ENCODE measurements at regions of chr3 and their contacts with region 1.

Region 1: GRCh38 chr3:116242825-116243224 is 202.5 kb downstream of the LSAMP start:
- DNase-seq: no peak
- ATAC-seq: no peak
- H3K4me3 ChIP-seq: no peak overlapping the region
- H3K4me3 Mint-ChIP-seq: no peak overlapping the region
- H3K27ac ChIP-seq: no peak overlapping the region
- H3K27ac Mint-ChIP-seq: no peak overlapping the region
- H3K4me1 ChIP-seq: no peaks in the 10 kb centered on the region
- H3K4me1 Mint-ChIP-seq: no peaks in the 10 kb centered on the region
- H3K27me3 ChIP-seq: no peaks in the 10 kb centered on the region
- H3K27me3 Mint-ChIP-seq: no peaks in the 10 kb centered on the region
- CTCF ChIP-seq: no peak

Region 2: GRCh38 chr3:115436767-115437301 is 806.0 kb before region 1 on chr3:
- CTCF ChIA-PET with region 1: no interaction called
- POLR2A ChIA-PET with region 1: no interaction called
- intact Hi-C with region 1: loop called in 1 of 2 experiments (anchors 5 kb)
- DNase-seq: no peak
- ATAC-seq: no peak
- H3K4me3 ChIP-seq: no peak overlapping the region
- H3K4me3 Mint-ChIP-seq: no peak overlapping the region
- H3K27ac ChIP-seq: no peak overlapping the region
- H3K27ac Mint-ChIP-seq: no peak overlapping the region
- H3K4me1 ChIP-seq: no peaks in the 10 kb centered on the region
- H3K4me1 Mint-ChIP-seq: no peaks in the 10 kb centered on the region
- H3K27me3 ChIP-seq: no peaks in the 10 kb centered on the region
- H3K27me3 Mint-ChIP-seq: no peaks in the 10 kb centered on the region
- CTCF ChIP-seq: no peak

Region 3: GRCh38 chr3:116211901-116212300 is 30.9 kb before region 1 on chr3:
- CTCF ChIA-PET with region 1: no interaction called
- POLR2A ChIA-PET with region 1: no interaction called
- intact Hi-C with region 1: no loop called
- DNase-seq: no peak
- ATAC-seq: no peak
- H3K4me3 ChIP-seq: no peak overlapping the region
- H3K4me3 Mint-ChIP-seq: no peak overlapping the region
- H3K27ac ChIP-seq: no peak overlapping the region
- H3K27ac Mint-ChIP-seq: no peak overlapping the region
- H3K4me1 ChIP-seq: no peaks in the 10 kb centered on the region
- H3K4me1 Mint-ChIP-seq: no peaks in the 10 kb centered on the region
- H3K27me3 ChIP-seq: no peaks in the 10 kb centered on the region
- H3K27me3 Mint-ChIP-seq: no peaks in the 10 kb centered on the region
- CTCF ChIP-seq: no peak

Region 4: GRCh38 chr3:116230431-116231020 is 12.3 kb before region 1 on chr3:
- CTCF ChIA-PET with region 1: no interaction called
- POLR2A ChIA-PET with region 1: no interaction called
- intact Hi-C with region 1: no loop called
- DNase-seq: no peak
- ATAC-seq: no peak
- H3K4me3 ChIP-seq: no peak overlapping the region
- H3K4me3 Mint-ChIP-seq: no peak overlapping the region
- H3K27ac ChIP-seq: no peak overlapping the region
- H3K27ac Mint-ChIP-seq: no peak overlapping the region
- H3K4me1 ChIP-seq: no peaks in the 10 kb centered on the region
- H3K4me1 Mint-ChIP-seq: no peaks in the 10 kb centered on the region
- H3K27me3 ChIP-seq: no peaks in the 10 kb centered on the region
- H3K27me3 Mint-ChIP-seq: no peaks in the 10 kb centered on the region
- CTCF ChIP-seq: no peak

Measured in CD8-positive, alpha-beta T cell (primary cell).